Activated T-helper 1 cell treated with anti-CD3 and anti-CD28 coated beads, Interleukin-12 subunit alpha, Interleukin-12 subunit beta, Interleukin-2, Interleukin-4 antibody, amounts not matched to agents 30 ng/mL and 10 ng/mL and 1 ng/mL, durations not matched to agents 14 hours and 24 hours and 36 hours (primary cell): ENCODE measurements at regions of chr12 and their contacts with region 1.

Region 1: GRCh38 chr12:50555471-50555885 is 50.7 kb downstream of the DIP2B start:
- DNase-seq: no peak
- H3K4me3 Mint-ChIP-seq: peak overlapping the region; percentile 48
- H3K27ac Mint-ChIP-seq: peak overlapping the region; percentile 91
- H3K4me1 Mint-ChIP-seq: peaks cover 33% of the 10 kb centered on the region
- H3K27me3 Mint-ChIP-seq: no peaks in the 10 kb centered on the region

Region 2: GRCh38 chr12:50517456-50518048 is 37.9 kb before region 1 on chr12:
- intact Hi-C with region 1: loop called (anchors 1 kb)
- DNase-seq: no peak
- H3K4me3 Mint-ChIP-seq: no peak overlapping the region
- H3K27ac Mint-ChIP-seq: no peak overlapping the region
- H3K4me1 Mint-ChIP-seq: peaks cover 31% of the 10 kb centered on the region
- H3K27me3 Mint-ChIP-seq: no peaks in the 10 kb centered on the region

Region 3: GRCh38 chr12:50597200-50598195 is 42.0 kb after region 1 on chr12:
- intact Hi-C with region 1: loop called (anchors 1 kb)
- DNase-seq: peak; percentile 26
- H3K4me3 Mint-ChIP-seq: peak overlapping the region; percentile 28
- H3K27ac Mint-ChIP-seq: peak overlapping the region; percentile 35
- H3K4me1 Mint-ChIP-seq: peaks cover 31% of the 10 kb centered on the region
- H3K27me3 Mint-ChIP-seq: no peaks in the 10 kb centered on the region

Region 4: GRCh38 chr12:50620109-50620977 is 64.9 kb after region 1 on chr12:
- intact Hi-C with region 1: loop called (anchors 1 kb)
- DNase-seq: no peak
- H3K4me3 Mint-ChIP-seq: no peak overlapping the region
- H3K27ac Mint-ChIP-seq: no peak overlapping the region
- H3K4me1 Mint-ChIP-seq: peaks cover 32% of the 10 kb centered on the region
- H3K27me3 Mint-ChIP-seq: no peaks in the 10 kb centered on the region